ENCODE measurements at regions of chr3 and their contacts with region 1.

Region 1: GRCh38 chr3:138174421-138175122 is at the start of gene DBR1:
- DNase-seq: peak; percentile 77
- H3K4me3 Mint-ChIP-seq: peak within 1 kb of the TSS; percentile 97
- H3K27ac Mint-ChIP-seq: peak within 1 kb of the TSS; percentile 92
- H3K4me1 Mint-ChIP-seq: peaks cover 40% of the 10 kb centered on the region
- H3K27me3 Mint-ChIP-seq: no peaks in the 10 kb centered on the region
- total RNA-seq, gene DBR1: 19.4 to 20.0 TPM

Region 2: DNA sequence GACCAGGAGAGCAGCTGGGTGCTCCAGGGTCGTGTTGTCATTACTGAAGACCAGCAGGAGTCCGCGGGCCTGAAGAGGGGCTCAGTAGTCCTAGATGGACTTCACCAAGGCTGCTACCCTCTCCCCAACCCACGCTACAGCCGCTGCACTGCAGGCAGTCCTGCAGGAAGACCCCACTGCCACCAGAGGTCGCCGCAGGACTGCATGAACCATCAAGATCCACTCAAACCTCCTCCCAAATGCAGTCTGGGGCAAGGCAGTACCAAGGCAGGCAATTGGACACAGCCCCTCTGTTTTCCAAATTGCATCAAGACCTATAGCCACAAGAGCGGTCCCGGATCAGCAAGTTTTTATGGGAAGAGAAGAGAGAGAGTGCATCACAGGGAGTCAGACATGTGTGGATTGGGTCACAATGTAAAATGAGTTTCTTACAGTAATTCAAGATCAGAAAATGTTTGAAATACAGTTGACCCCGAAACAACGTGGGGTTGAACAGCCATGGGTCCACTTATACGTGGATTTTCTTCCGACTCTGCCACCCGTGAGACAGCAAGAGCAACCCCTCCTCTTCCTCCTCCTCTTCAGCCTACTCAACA is 105.9 kb before region 1 on chr3:
- CTCF ChIA-PET with region 1: no interaction called
- POLR2A ChIA-PET with region 1: no interaction called
- DNase-seq: peak; percentile 79
- H3K4me3 Mint-ChIP-seq: no peak overlapping the region
- H3K27ac Mint-ChIP-seq: no peak overlapping the region
- H3K4me1 Mint-ChIP-seq: peaks cover 21% of the 10 kb centered on the region
- H3K27me3 Mint-ChIP-seq: peaks cover 36% of the 10 kb centered on the region

Region 3: DNA sequence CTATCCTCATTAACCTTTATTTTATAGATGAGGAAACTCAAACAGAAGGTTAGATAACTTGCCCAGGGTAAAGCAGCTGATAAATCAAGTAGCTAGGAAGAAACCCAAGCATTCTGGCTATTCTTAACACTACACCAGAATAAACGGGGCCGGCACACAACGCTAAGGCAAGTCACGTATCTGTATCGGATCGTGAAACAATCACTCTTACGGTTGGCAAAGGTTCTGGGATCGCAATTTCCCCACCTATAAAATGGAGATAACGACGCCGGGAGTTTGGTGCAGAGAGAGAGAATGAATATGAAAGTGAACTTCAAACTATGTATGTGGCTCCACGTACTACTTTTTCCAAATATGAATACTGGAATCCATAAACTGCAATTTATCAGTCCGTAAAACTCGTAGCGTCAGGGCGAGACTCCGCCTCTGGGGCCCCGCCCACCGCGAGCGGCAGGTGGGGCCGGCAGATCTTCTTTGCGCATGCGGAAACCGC is 12.3 kb after region 1 on chr3:
- CTCF ChIA-PET with region 1: interaction called, 6 read pairs
- POLR2A ChIA-PET with region 1: interaction called, 85 read pairs
- DNase-seq: peak; percentile 91
- H3K4me3 Mint-ChIP-seq: peak overlapping the region; percentile 94
- H3K27ac Mint-ChIP-seq: peak overlapping the region; percentile 91
- H3K4me1 Mint-ChIP-seq: peaks cover 36% of the 10 kb centered on the region
- H3K27me3 Mint-ChIP-seq: peaks cover 16% of the 10 kb centered on the region

Measured in activated CD4-positive, alpha-beta memory T cell treated with anti-CD3 and anti-CD28 coated beads, Interleukin-2, amount 10 ng/mL, durations not matched to agents 7 days and 5 days (primary cell).